ENCODE measurements at regions of chr4 and their contacts with region 1.

Region 1: GRCh38 chr4:169383724-169384123 is 113.0 kb upstream of the SH3RF1 start:
- DNase-seq: no peak
- ATAC-seq: no peak
- H3K4me3 ChIP-seq: no peak overlapping the region
- H3K27ac ChIP-seq: no peak overlapping the region
- H3K4me1 ChIP-seq: no peaks in the 10 kb centered on the region
- H3K27me3 ChIP-seq: no peaks in the 10 kb centered on the region
- CTCF ChIP-seq: no peak

Region 2: DNA sequence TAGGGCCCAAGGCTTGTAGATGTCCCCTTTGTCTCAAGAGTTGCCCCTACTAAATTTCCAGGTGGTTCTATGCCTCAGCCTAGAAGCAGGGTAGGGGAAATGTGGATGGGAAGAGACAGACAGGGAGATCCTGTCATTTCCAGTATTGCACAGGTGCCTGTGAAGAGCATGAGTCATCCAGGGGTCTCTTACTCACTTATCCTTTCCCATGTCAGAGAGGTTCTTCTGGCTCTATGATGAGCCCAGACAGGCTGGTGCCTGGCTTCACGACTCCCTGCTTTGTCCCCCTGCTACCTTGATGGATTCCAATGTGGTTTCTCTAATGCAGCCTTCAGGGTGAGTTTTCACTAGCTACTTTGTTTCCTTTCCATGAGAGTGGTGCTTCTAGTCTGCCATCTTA is 1030.0 kb before region 1 on chr4:
- CTCF ChIA-PET with region 1: no interaction called
- POLR2A ChIA-PET with region 1: no interaction called
- in situ Hi-C with region 1: no loop called
- intact Hi-C with region 1: no loop called
- DNase-seq: no peak
- ATAC-seq: no peak
- H3K4me3 ChIP-seq: no peak overlapping the region
- H3K27ac ChIP-seq: no peak overlapping the region
- H3K4me1 ChIP-seq: no peaks in the 10 kb centered on the region
- H3K27me3 ChIP-seq: no peaks in the 10 kb centered on the region
- CTCF ChIP-seq: no peak

Region 3: DNA sequence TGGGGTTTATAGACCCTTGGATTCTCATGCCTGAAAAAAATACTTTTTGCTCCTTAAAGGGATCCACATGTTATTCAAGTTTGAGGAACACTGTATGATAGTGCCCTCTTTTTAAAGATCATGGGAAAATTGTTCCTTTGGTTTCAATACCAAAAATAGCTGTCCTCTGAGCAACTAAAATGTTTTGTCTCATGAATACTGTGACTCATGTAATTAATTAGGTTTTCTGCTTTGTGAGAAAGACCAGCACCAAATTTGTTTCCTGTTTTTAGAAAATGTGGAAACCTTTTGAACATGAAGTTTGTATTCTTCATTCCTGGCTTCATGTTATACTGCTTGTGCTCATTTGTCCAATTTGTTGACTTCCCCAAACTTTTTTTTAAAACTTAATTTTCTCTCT is 14.6 kb after region 1 on chr4:
- CTCF ChIA-PET with region 1: no interaction called
- POLR2A ChIA-PET with region 1: interaction called, 10 read pairs
- in situ Hi-C with region 1: no loop called
- intact Hi-C with region 1: no loop called
- DNase-seq: no peak
- ATAC-seq: no peak
- H3K4me3 ChIP-seq: no peak overlapping the region
- H3K27ac ChIP-seq: no peak overlapping the region
- H3K4me1 ChIP-seq: no peaks in the 10 kb centered on the region
- H3K27me3 ChIP-seq: no peaks in the 10 kb centered on the region
- CTCF ChIP-seq: no peak